ENCODE measurements at regions of chr6 and their contacts with region 1.

Region 1: GRCh38 chr6:131063028-131063763 is at the start of gene EPB41L2:
- DNase-seq: peak; percentile 94
- ATAC-seq: peak; percentile 92
- total RNA-seq, gene EPB41L2: 889 TPM

Region 2: GRCh38 chr6:130890521-130890971 is 172.7 kb before region 1 on chr6:
- intact Hi-C with region 1: loop called (anchors 10 kb)
- DNase-seq: no peak
- ATAC-seq: no peak

Measured in sciatic nerve (tissue), 2 donors.